MCF 10A (cell line): ENCODE measurements at regions of chr6 and their contacts with region 1.

Region 1: GRCh38 chr6:121334299-121335086 is at the start of gene TBC1D32:
- DNase-seq: peak; percentile 88
- H3K4me3 Mint-ChIP-seq: peak within 1 kb of the TSS; percentile 81
- H3K27ac Mint-ChIP-seq: peak within 1 kb of the TSS; percentile 98
- H3K4me1 Mint-ChIP-seq: peaks cover 32% of the 10 kb centered on the region
- H3K27me3 Mint-ChIP-seq: no peaks in the 10 kb centered on the region
- CTCF ChIP-seq: no peak
- total RNA-seq, gene TBC1D32: 10.2 and 11.0 TPM in 2 replicates

Region 2: DNA sequence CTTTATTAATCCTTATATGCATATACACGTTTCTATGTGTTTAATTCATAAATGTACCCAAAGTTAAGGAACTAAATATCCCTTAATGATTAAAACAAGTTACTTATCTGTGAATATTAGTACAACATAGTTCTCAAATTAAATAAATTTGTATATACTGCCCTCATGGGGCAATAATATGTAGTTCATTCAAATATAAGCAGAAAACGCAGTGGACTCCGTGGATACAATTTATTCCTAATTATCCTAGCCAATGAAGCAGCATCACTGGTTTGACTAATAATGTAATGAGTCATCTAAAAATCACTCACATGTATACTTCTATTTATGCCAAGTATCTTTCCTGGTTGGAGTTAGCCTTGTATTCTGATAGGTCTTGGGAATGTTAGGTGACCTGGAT is 111.8 kb before region 1 on chr6:
- CTCF ChIA-PET with region 1: no interaction called
- POLR2A ChIA-PET with region 1: no interaction called
- intact Hi-C with region 1: no loop called
- DNase-seq: peak; percentile 48
- H3K4me3 Mint-ChIP-seq: no peak overlapping the region
- H3K27ac Mint-ChIP-seq: no peak overlapping the region
- H3K4me1 Mint-ChIP-seq: no peaks in the 10 kb centered on the region
- H3K27me3 Mint-ChIP-seq: no peaks in the 10 kb centered on the region
- CTCF ChIP-seq: peak; percentile 36

Region 3: DNA sequence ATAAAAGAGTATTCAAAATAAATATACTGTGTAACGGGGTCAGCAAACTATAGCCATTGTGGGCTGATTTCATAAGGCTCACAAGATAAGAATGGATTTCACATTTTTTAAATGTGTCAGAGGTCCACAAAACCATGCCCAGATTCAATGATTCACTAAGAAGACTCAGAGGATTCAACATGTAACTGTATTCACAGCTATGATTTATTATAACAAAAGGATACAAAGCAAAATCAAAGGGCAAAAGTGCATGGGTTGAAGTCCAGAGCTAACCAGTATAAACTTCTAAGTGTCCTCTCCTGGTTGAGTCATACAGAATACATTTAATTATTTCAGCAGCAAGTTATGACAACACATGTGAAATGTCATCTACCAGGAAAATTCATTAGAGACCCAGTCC is 49.5 kb before region 1 on chr6:
- CTCF ChIA-PET with region 1: no interaction called
- POLR2A ChIA-PET with region 1: no interaction called
- intact Hi-C with region 1: no loop called
- DNase-seq: no peak
- H3K4me3 Mint-ChIP-seq: no peak overlapping the region
- H3K27ac Mint-ChIP-seq: no peak overlapping the region
- H3K4me1 Mint-ChIP-seq: no peaks in the 10 kb centered on the region
- H3K27me3 Mint-ChIP-seq: no peaks in the 10 kb centered on the region
- CTCF ChIP-seq: no peak

Region 4: GRCh38 chr6:121319112-121319553 is 15.4 kb before region 1 on chr6:
- CTCF ChIA-PET with region 1: interaction called, 10 read pairs
- POLR2A ChIA-PET with region 1: interaction called, 8 read pairs
- intact Hi-C with region 1: no loop called
- DNase-seq: peak; percentile 11
- H3K4me3 Mint-ChIP-seq: no peak overlapping the region
- H3K27ac Mint-ChIP-seq: no peak overlapping the region
- H3K4me1 Mint-ChIP-seq: no peaks in the 10 kb centered on the region
- H3K27me3 Mint-ChIP-seq: no peaks in the 10 kb centered on the region
- CTCF ChIP-seq: peak; percentile 42

Region 5: DNA sequence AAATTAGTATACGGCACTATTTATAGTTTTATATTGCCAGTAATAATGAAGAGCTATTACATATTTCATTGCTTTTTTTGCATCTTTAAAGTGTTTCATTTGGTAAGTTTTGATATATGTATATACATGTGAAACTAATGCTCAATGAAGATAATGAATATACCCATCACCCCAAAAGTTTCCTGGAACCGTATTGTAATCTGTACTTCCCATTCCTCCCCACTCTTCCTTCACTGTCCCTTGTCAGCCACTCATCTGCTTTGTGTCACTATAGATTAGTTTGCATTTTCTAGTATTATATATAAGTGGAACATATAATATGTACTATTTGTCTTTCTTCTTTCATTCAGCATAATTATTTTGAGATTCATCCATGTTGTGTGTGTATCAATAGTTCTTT is 10.0 kb after region 1 on chr6:
- CTCF ChIA-PET with region 1: no interaction called
- POLR2A ChIA-PET with region 1: interaction called, 13 read pairs
- intact Hi-C with region 1: no loop called
- DNase-seq: no peak
- H3K4me3 Mint-ChIP-seq: no peak overlapping the region
- H3K27ac Mint-ChIP-seq: no peak overlapping the region
- H3K4me1 Mint-ChIP-seq: no peaks in the 10 kb centered on the region
- H3K27me3 Mint-ChIP-seq: no peaks in the 10 kb centered on the region
- CTCF ChIP-seq: no peak